ENCODE measurements at regions of chr7 and their contacts with region 1.

Region 1: DNA sequence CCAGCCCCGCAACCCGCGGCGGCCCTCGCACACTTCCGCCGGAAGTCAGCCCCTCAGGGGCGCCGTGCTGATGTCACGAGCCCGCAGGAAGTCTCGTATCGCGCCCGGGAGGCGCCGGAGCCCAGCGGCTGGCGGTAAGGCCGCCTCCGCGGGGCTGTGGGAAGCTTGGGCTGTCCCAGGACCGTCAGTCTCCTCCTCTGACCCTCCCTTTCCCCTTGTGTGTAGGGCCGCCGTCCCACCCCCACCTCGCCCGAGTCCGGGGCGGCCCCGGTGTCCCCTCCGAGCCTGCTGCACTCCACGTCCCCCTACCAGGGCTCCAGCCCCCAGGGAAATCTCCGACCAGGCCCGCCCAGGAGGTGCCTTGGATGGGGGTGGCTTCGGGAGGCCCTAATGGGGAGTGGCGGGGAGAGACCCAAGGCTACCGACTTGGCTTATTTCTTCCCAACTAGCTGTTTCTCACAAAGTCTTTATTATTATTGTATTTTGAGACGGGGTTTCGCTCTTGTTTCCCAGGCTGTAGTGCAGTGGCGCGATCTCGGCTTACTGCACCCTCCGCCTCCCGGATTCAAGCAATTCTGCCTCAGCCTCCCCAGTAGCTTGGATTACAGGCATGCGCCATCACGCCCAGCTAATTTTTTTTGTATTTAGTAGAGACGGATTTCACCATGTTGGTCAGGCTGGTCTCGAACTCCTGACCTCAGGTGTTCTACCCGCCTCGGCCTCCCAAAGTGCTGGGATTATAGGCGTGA is at the start of gene ZDHHC4:
- DNase-seq: peak; percentile 81 to 92
- H3K4me3 ChIP-seq: peak within 1 kb of the TSS; percentile 82
- H3K27ac ChIP-seq: peak within 1 kb of the TSS; percentile 72
- H3K4me1 ChIP-seq: peaks cover 17% of the 10 kb centered on the region
- H3K27me3 ChIP-seq: no peaks in the 10 kb centered on the region
- CTCF ChIP-seq: 0 out of 2 replicates have a peak, but pooled peaks have one; percentile 19
- total RNA-seq, gene ZDHHC4: 96.1 and 123 TPM in 2 replicates

Region 2: GRCh38 chr7:6558837-6559236 is 18.7 kb before region 1 on chr7:
- CTCF ChIA-PET with region 1: interaction called, 6 read pairs
- POLR2A ChIA-PET with region 1: interaction called, 21 read pairs
- intact Hi-C with region 1: no loop called
- DNase-seq: peak in 1 of 2 experiments; percentile 28
- H3K4me3 ChIP-seq: no peak overlapping the region
- H3K27ac ChIP-seq: no peak overlapping the region
- H3K4me1 ChIP-seq: no peaks in the 10 kb centered on the region
- H3K27me3 ChIP-seq: no peaks in the 10 kb centered on the region
- CTCF ChIP-seq: peak; percentile 60

Region 3: GRCh38 chr7:6614953-6615722 is 37.6 kb after region 1 on chr7 and contains the start of gene ZNF853:
- CTCF ChIA-PET with region 1: interaction called, 4 read pairs
- POLR2A ChIA-PET with region 1: interaction called, 18 read pairs
- intact Hi-C with region 1: no loop called
- DNase-seq: no peak
- H3K4me3 ChIP-seq: peak within 1 kb of the TSS; percentile 83
- H3K27ac ChIP-seq: no peak within 1 kb of the TSS
- H3K4me1 ChIP-seq: 0 out of 2 replicates have a peak, but pooled peaks cover 14% of the 10 kb centered on the region
- H3K27me3 ChIP-seq: no peaks in the 10 kb centered on the region
- CTCF ChIP-seq: no peak
- total RNA-seq, gene ZNF853: 7.9 and 13.5 TPM in 2 replicates

Region 4: DNA sequence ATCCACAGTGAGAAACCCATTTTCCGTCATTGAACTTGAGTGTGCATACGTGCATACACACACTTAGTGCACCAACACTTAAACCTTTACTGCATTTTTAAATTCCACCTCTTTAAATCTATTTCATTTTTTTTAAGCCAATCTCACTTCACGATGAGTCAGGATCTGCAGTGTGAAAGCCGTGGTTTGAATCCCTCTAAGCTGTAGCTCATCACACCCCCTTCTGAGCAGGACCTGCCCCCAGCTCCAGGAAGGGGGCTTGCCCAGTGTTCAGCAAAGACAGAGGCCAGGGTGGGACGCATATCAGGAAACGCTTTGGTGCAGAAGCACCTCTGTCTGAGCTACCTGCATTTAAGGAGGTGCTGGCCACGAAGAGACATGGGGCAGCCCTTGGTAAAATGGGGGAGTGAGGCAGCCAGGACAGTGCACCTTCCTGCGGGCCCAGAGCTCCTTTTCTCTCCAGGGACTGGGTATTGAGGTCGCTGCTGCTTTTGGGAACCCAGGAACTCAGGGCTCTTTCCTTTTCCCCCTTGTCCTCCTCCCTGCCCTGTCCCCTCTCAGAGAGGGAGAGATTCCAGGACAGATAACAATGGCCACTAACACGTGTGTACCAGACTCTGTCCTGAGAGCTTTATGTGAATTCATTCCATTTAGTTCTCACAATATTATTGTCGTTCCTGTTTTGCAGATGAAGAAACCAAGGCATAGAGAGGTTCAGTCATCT is 81.2 kb after region 1 on chr7:
- CTCF ChIA-PET with region 1: no interaction called
- POLR2A ChIA-PET with region 1: interaction called, 10 read pairs
- intact Hi-C with region 1: no loop called
- DNase-seq: no peak
- H3K4me3 ChIP-seq: no peak overlapping the region
- H3K27ac ChIP-seq: no peak overlapping the region
- H3K4me1 ChIP-seq: no peaks in the 10 kb centered on the region
- H3K27me3 ChIP-seq: no peaks in the 10 kb centered on the region; the same call in 1 of the 2 replicates
- CTCF ChIP-seq: no peak